Activated CD4-positive, alpha-beta memory T cell treated with anti-CD3 and anti-CD28 coated beads for 36 hours (primary cell): ENCODE measurements at regions of chr20 and their contacts with region 1.

Region 1: GRCh38 chr20:33666293-33667244 is at the start of gene ACTL10:
- DNase-seq: peak; percentile 93
- H3K4me3 Mint-ChIP-seq: peak within 1 kb of the TSS; percentile 80
- H3K27ac Mint-ChIP-seq: peak within 1 kb of the TSS; percentile 90
- H3K4me1 Mint-ChIP-seq: peaks cover 38% of the 10 kb centered on the region
- H3K27me3 Mint-ChIP-seq: no peaks in the 10 kb centered on the region
- total RNA-seq, gene ACTL10: 1.8 to 2.3 TPM

Region 2: DNA sequence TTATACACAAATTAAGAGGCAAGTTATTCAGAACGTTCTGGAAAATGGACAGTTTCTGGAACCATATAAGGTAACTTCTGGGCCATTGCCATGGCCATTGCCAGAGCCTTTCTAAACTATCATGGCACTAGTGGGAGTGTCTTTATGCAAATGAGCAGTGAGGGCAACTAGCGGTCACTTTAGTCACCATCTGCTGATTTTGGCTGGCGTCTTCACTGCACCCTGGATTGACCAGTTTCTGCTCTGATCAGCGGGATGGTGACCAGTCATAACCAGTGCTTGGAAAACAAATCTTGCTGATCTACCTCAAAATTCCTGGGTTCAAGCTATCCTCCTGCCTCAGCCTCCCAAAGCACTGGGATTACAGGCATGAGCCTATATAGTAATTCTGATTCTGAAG is 215.7 kb before region 1 on chr20:
- CTCF ChIA-PET with region 1: interaction called, 32 read pairs
- POLR2A ChIA-PET with region 1: interaction called, 3 read pairs
- intact Hi-C with region 1: no loop called
- DNase-seq: no peak
- H3K4me3 Mint-ChIP-seq: no peak overlapping the region
- H3K27ac Mint-ChIP-seq: no peak overlapping the region
- H3K4me1 Mint-ChIP-seq: no peaks in the 10 kb centered on the region
- H3K27me3 Mint-ChIP-seq: no peaks in the 10 kb centered on the region

Region 3: GRCh38 chr20:33545763-33546162 is 120.8 kb before region 1 on chr20:
- CTCF ChIA-PET with region 1: interaction called, 10 read pairs
- POLR2A ChIA-PET with region 1: interaction called, 3 read pairs
- intact Hi-C with region 1: no loop called
- DNase-seq: no peak
- H3K4me3 Mint-ChIP-seq: no peak overlapping the region
- H3K27ac Mint-ChIP-seq: no peak overlapping the region
- H3K4me1 Mint-ChIP-seq: peaks cover 3% of the 10 kb centered on the region
- H3K27me3 Mint-ChIP-seq: no peaks in the 10 kb centered on the region

Region 4: GRCh38 chr20:33679758-33680485 is 13.4 kb after region 1 on chr20:
- CTCF ChIA-PET with region 1: interaction called, 42 read pairs
- POLR2A ChIA-PET with region 1: interaction called, 21 read pairs
- intact Hi-C with region 1: no loop called
- DNase-seq: peak; percentile 79
- H3K4me3 Mint-ChIP-seq: no peak overlapping the region
- H3K27ac Mint-ChIP-seq: peak overlapping the region; percentile 80
- H3K4me1 Mint-ChIP-seq: peaks cover 69% of the 10 kb centered on the region
- H3K27me3 Mint-ChIP-seq: no peaks in the 10 kb centered on the region

Region 5: DNA sequence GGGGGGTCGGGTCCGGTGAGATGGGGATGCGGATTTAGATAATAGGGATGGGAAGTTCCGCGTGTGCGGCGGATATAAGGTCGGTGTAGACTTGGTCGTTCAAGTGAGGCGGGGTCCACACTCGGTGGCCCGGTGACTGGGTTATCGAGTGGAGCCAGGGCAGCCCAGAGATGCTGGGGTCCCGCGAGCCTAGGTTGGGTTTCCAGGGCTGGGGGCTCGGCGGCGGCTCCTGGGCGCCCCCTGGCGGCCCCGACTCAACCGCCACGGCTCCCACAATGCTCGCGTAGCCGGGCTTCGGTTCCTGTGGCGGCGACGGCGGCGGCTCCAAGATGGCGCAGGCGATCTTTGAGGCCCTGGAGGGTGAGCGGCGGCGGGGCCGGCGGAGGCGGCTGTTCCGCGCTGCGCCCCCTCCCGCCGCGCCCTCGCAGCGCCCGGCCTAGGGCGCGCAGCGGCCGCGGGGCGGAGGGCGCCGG is 65.2 kb after region 1 on chr20 and contains the start of gene ZNF341:
- CTCF ChIA-PET with region 1: interaction called, 24 read pairs
- POLR2A ChIA-PET with region 1: interaction called, 18 read pairs
- intact Hi-C with region 1: no loop called
- DNase-seq: peak; percentile 92
- H3K4me3 Mint-ChIP-seq: peak within 1 kb of the TSS; percentile 75
- H3K27ac Mint-ChIP-seq: peak within 1 kb of the TSS; percentile 82
- H3K4me1 Mint-ChIP-seq: peaks cover 19% of the 10 kb centered on the region
- H3K27me3 Mint-ChIP-seq: no peaks in the 10 kb centered on the region
- total RNA-seq, gene ZNF341: 5.9 TPM